Endothelial cell of umbilical vein (primary cell): ENCODE measurements at regions of chr3 and their contacts with region 1.

Region 1: DNA sequence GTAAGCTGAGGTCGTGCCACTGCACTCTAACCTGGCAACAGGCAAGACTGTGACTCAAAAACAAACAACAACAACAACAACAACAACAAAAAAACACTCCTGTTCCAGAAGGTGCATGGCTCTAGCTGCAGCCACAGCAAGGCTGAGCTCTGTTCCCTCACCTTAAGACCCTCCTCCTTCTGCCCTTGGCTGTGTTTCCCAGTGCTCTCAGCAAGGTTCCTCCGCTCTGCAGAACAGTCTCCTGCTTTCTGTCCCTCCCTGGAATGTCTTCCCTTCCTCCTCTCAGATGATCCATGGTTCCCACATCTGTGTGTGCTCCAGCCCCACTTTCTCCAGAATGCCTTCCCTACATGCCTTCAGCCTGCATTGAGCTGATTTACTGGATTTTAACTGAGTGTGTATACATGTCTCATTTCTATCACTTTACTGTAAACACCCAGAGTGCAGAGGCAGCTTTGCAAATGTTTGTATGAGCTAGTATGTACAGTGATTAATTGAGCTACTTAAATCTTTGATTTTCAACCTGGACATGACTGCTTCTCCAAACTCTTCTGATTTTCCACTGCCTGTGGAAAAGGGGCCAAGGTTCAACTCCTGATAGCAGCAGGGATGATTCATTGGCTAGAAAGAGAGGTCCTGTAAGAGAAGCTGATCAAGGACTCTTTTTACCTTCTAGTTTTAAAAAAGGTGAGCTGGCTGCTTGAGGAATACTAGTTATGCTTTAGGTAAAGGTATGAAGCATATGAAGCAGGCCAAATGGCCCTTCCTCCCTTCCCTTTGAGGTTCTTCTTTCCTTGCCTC is 14.7 kb downstream of the ANKUB1 start:
- DNase-seq: no peak
- H3K4me3 ChIP-seq: no peak overlapping the region
- H3K27ac ChIP-seq: no peak overlapping the region
- H3K4me1 ChIP-seq: no peaks in the 10 kb centered on the region
- H3K27me3 ChIP-seq: no peaks in the 10 kb centered on the region
- CTCF ChIP-seq: no peak
- POLR2A ChIP-seq: no peak

Region 2: GRCh38 chr3:149765762-149766334 is 11.8 kb before region 1 on chr3:
- CTCF ChIA-PET with region 1: interaction called, 38 read pairs
- POLR2A ChIA-PET with region 1: no interaction called
- dilution Hi-C with region 1: no loop called
- intact Hi-C with region 1: no loop called
- DNase-seq: peak; percentile 59
- H3K4me3 ChIP-seq: no peak overlapping the region
- H3K27ac ChIP-seq: no peak overlapping the region
- H3K4me1 ChIP-seq: no peaks in the 10 kb centered on the region
- H3K27me3 ChIP-seq: peaks cover 33 to 42% of the 10 kb centered on the region in 2 experiments
- CTCF ChIP-seq: peak; percentile 20 to 39
- POLR2A ChIP-seq: no peak